Panc1 (cell line): ENCODE measurements at regions of chr11 and their contacts with region 1.

Region 1: DNA sequence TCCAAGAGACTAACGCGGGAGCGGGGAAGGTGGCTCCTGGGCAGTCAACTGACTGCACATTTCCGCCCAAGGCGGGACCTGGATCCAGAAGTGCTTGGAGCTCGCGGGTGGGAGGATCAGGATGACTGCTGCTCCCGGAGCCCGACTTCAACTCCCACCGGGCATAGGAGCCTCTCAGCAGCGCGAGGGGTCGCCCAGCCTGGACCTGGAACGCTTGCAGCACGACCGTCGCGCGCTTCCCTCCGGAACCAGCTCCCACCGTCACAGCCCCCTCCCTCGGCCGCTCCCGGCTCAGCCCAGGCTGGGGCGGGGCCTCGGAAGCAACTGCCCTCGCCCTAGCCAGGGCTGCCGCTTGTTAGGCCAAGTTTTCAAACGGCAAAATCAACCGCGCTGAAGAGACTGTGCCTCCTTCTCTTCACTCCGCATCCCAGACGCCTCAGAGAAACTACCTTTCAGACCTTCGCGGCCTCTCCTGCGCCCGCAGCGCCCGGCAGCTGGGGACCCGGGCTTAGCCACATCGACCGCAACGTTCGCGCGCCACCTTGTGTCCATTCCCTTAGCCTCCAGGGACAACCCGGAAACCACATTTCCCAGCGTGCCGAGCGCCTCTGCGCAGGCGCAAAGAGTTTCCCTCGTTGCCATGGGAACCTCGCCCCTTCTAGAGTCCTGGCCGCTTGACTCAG is 14.0 kb downstream of the SSH3 start:
- DNase-seq: peak; percentile 93
- ATAC-seq: peak; percentile 95
- H3K4me3 ChIP-seq: peak overlapping the region; percentile 82 to 85
- H3K27ac ChIP-seq: peak overlapping the region; percentile 97
- H3K4me1 ChIP-seq: peaks cover 6% of the 10 kb centered on the region; the same call in 1 of the 2 replicates
- H3K27me3 ChIP-seq: no peaks in the 10 kb centered on the region
- CTCF ChIP-seq: peak; percentile 99

Region 2: DNA sequence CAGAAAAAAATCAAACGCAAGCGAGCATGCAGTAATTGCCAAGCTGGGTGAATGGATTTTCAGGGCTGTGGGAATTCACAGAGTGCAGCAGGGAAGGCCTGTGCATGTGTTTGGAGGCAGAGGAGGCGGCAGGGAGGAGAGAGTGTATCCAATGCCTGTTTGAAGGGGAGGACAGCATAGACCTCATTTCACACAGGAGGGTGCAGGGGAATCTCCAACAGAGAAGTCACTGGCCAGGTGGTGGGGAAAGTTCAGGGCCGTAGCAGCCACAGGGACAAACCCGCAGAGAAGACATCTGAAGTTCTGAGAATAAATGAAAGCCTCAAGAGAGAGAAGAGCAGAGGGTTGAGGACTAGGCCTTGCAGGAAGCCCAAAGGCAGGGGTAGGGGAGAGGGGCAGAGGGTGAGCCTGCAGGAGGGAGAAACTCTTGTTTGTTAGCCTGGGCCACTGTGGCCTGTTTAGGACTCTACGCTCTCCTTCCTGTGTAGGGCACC is 217.5 kb before region 1 on chr11:
- CTCF ChIA-PET with region 1: no interaction called
- POLR2A ChIA-PET with region 1: no interaction called
- in situ Hi-C with region 1: no loop called
- intact Hi-C with region 1: loop called (anchors 10 kb)
- DNase-seq: no peak
- ATAC-seq: no peak
- H3K4me3 ChIP-seq: no peak overlapping the region
- H3K27ac ChIP-seq: no peak overlapping the region
- H3K4me1 ChIP-seq: no peaks in the 10 kb centered on the region
- H3K27me3 ChIP-seq: no peaks in the 10 kb centered on the region
- CTCF ChIP-seq: no peak

Region 3: DNA sequence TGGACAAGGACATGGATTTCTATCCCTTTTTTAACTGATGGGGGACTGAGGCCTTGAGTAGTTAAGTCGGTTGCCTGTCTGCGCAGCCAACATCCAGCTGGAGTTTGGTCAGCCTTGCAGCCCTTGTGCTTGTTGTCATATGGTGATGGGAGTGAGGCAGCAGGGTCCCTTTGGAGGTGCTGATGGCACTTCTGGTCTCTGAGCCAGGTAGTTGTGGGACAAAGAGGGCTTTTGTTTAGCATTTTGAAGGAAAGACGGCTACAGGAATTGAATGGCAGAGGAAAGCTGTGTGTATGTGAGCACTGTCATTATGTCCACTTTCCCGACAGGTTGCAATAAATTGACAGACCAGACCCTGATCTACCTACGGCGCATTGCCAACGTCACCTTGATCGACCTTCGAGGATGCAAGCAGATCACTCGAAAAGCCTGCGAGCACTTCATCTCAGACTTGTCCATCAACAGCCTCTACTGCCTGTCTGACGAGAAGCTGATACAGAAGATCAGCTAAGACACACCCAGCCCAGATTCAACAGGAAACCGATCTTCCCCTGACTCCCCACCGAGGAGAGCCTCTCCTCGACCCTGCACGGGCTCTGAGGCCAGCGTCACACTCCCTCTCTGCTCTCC is 62.7 kb before region 1 on chr11:
- CTCF ChIA-PET with region 1: no interaction called
- POLR2A ChIA-PET with region 1: no interaction called
- in situ Hi-C with region 1: no loop called
- intact Hi-C with region 1: no loop called
- DNase-seq: no peak
- ATAC-seq: no peak
- H3K4me3 ChIP-seq: no peak overlapping the region
- H3K27ac ChIP-seq: no peak overlapping the region
- H3K4me1 ChIP-seq: no peaks in the 10 kb centered on the region
- H3K27me3 ChIP-seq: no peaks in the 10 kb centered on the region
- CTCF ChIP-seq: no peak

Region 4: DNA sequence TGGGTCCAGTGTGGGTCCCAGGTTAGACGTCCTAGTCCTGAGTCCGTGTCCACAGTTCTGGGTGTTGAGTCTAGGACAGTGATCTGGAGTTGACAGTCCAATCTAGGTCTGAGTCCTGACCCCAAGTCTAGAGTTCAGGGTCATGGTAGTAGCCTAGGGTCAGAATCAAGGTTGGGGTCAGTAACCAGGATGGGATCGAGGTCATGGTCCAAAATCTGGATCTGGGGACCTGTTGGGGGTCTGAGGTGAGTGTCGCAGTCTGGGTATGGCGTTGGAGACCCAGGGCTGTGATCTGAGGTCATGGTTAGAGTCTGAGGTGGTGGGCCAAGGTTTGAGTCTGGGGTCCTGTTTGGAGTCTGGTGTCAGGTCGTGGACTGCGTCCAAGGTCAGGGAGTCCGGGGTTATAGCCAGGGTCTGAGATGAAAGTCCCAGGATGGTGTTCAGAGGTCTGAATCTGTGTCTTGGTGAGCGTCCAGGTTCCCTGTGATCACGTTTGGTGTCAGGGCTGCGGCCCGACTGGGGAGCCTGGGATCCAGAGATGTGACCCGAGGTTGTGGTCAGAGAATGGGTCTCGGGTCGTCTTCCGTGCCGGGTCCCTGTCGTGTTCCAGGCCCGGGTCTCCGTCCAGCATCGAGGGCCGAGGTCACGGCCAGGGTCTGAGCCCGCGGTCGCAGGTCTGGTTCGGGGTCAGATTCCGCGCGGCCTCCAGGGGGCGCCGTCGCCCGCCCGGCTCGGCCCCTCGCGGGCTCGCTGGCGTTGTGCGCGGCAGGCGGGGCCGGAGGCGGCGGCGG is 51.5 kb before region 1 on chr11:
- CTCF ChIA-PET with region 1: interaction called, 21 read pairs
- POLR2A ChIA-PET with region 1: interaction called, 15 read pairs
- in situ Hi-C with region 1: no loop called
- intact Hi-C with region 1: loop called (anchors 2 kb)
- DNase-seq: no peak
- ATAC-seq: peak; percentile 83
- H3K4me3 ChIP-seq: peak overlapping the region in 1 of 2 experiments; percentile 37; a peak in 2 of 4 replicates
- H3K27ac ChIP-seq: peak overlapping the region; percentile 64
- H3K4me1 ChIP-seq: peaks cover 48% of the 10 kb centered on the region
- H3K27me3 ChIP-seq: no peaks in the 10 kb centered on the region
- CTCF ChIP-seq: peak; percentile 94; the same call in 1 of the 2 replicates